ENCODE measurements at regions of chr2 and their contacts with region 1.

Region 1: GRCh38 chr2:228657807-228658402 is 476.4 kb upstream of the SPHKAP start:
- DNase-seq: no peak
- ATAC-seq: peak; percentile 62 to 83 (median 70)
- H3K4me3 ChIP-seq: no peak overlapping the region
- H3K27ac ChIP-seq: no peak overlapping the region
- H3K4me1 ChIP-seq: peaks cover 9 to 22% (median 14%) of the 10 kb centered on the region in 3 donors
- H3K27me3 ChIP-seq: no peaks in the 10 kb centered on the region
- CTCF ChIP-seq: peak in 3 of 4 donors; percentile 30 to 51 (median 42)

Region 2: DNA sequence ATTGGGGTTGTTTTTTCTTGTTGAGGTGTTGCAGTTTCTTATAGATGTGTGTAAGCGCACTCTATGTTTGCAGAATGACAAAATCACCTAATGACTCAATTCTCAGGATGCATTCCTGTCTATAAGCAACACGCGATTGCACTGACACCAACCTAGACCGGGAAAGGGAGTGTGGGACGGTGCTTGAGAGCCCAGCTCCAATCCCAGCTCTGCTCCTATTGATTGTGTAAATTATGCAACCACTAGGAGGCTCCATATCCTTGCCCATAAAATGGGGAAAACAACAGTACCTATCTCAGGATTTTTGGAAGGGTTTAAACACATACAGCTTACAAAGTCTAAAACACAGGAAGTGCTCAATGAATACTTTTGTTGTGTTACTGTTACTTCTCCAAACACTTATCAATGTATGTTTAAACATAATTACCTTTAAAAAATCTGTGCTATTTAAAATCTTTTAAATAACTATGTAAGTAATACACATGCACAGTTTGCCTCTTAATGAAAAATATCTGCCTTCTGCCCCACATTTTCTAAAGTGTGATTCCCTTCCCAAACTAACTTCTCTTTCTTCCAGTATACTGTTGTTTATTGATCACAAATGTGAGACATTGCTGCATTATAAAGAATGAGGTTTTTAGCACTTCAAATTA is 608.9 kb before region 1 on chr2:
- intact Hi-C with region 1: loop called in 2 of 3 experiments (anchors 5 to 10 kb)
- DNase-seq: peak in 3 of 6 donors; percentile 9 to 35 (median 27)
- ATAC-seq: peak; percentile 79 to 97 (median 92)
- H3K4me3 ChIP-seq: no peak overlapping the region
- H3K27ac ChIP-seq: no peak overlapping the region
- H3K4me1 ChIP-seq: no peaks in the 10 kb centered on the region
- H3K27me3 ChIP-seq: no peaks in the 10 kb centered on the region
- CTCF ChIP-seq: peak; percentile 13 to 45 (median 24)

Region 3: GRCh38 chr2:228056293-228057097 is 601.4 kb before region 1 on chr2:
- intact Hi-C with region 1: loop called in 2 of 3 experiments (anchors 5 to 10 kb)
- DNase-seq: no peak
- ATAC-seq: no peak
- H3K4me3 ChIP-seq: no peak overlapping the region
- H3K27ac ChIP-seq: no peak overlapping the region
- H3K4me1 ChIP-seq: no peaks in the 10 kb centered on the region
- H3K27me3 ChIP-seq: no peaks in the 10 kb centered on the region
- CTCF ChIP-seq: no peak

Region 4: DNA sequence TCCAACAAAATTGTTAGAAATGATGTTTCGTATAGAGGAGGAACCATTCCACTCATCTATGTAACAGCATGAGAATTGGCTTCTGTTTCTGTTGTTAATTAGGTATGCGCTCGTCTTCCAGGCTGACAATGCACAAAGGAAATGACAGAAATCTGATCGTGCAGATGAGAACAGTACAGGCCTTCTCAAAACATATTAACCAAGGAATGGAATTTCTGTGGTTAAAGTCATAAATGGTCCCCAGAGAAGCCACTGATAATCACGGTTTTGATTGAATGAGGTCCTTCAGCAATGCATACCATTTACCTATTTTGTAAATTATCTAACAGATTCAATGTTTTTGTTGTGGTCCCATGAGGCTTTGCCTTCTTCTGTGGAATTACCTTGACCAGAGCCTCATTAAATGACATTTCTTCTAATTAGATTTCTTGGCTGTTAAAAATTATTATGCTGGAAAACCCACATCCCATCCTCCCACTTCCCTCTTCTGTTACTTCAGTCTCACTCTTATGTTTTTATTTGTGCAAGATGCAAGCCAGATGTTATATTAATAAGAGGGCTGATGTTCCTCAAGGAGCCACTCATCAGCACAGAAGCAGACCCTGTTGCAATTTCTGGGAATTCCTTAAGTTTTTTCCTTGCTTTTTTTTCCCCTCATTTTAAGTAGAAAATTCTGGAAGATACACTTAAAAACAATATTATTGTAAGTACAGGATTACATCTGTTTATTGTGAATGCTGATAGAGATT is 217.4 kb after region 1 on chr2:
- intact Hi-C with region 1: no loop called
- DNase-seq: no peak
- ATAC-seq: no peak
- H3K4me3 ChIP-seq: no peak overlapping the region
- H3K27ac ChIP-seq: no peak overlapping the region
- H3K4me1 ChIP-seq: no peaks in the 10 kb centered on the region
- H3K27me3 ChIP-seq: no peaks in the 10 kb centered on the region
- CTCF ChIP-seq: no peak

Measured in pancreas (tissue), 10 donors.